KBM-7 (cell line): ENCODE measurements at regions of chr13 and their contacts with region 1.

Region 1: DNA sequence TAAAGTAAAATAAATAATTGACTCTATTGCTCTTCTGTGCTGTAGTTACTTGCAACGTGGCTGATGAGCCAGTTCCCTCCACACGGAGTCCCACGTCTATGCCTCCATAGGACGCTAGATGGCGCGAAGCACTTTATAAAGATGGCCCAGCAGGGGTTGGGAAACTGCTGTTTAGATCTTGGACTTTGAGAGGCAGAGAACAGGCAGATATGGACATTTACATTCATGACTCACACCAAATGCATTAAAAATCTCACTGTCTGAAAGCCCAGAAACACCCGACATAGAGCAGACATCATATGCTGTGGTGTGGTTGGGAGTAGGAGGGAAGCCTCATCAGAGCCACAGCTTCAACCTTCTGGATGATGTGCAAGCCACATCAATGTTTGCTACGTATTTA is 643.1 kb upstream of the ARGLU1 start:
- DNase-seq: peak; percentile 73

Region 2: GRCh38 chr13:108155185-108156106 is 944.4 kb after region 1 on chr13:
- in situ Hi-C with region 1: loop called (anchors 25 kb)
- DNase-seq: peak; percentile 59